GM23248 (cell line): ENCODE measurements at regions of chr7 and their contacts with region 1.

Region 1: GRCh38 chr7:140810830-140811556 is 113.7 kb downstream of the BRAF start:
- DNase-seq: peak; percentile 72
- H3K4me3 ChIP-seq: no peak overlapping the region
- H3K27ac ChIP-seq: no peak overlapping the region
- H3K4me1 ChIP-seq: no peaks in the 10 kb centered on the region
- H3K27me3 ChIP-seq: no peaks in the 10 kb centered on the region

Region 2: DNA sequence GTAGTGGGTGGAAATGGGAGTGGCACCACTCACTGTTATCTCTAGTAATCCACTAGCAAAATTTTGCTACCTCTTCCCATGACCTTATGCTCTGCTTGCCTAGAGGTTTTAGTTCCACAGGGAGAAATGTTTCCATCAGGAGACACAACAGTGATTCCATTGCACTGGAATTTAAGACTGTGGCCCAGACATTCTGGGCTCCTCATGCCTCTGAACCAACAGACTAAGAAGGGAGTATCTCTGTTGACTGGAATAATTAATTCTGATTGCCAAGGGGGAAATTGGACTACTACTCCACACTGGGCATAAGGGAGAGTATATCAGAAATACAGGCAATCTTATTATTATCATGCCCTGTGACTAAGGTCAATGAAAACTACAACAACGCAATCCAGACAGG is 129.9 kb after region 1 on chr7:
- in situ Hi-C with region 1: no loop called
- DNase-seq: peak; percentile 4
- H3K4me3 ChIP-seq: no peak overlapping the region
- H3K27ac ChIP-seq: no peak overlapping the region
- H3K4me1 ChIP-seq: no peaks in the 10 kb centered on the region
- H3K27me3 ChIP-seq: no peaks in the 10 kb centered on the region

Region 3: GRCh38 chr7:141001122-141001521 is 190.1 kb after region 1 on chr7:
- in situ Hi-C with region 1: loop called (anchors 10 kb)
- DNase-seq: no peak
- H3K4me3 ChIP-seq: no peak overlapping the region
- H3K27ac ChIP-seq: no peak overlapping the region
- H3K4me1 ChIP-seq: no peaks in the 10 kb centered on the region
- H3K27me3 ChIP-seq: no peaks in the 10 kb centered on the region

Region 4: DNA sequence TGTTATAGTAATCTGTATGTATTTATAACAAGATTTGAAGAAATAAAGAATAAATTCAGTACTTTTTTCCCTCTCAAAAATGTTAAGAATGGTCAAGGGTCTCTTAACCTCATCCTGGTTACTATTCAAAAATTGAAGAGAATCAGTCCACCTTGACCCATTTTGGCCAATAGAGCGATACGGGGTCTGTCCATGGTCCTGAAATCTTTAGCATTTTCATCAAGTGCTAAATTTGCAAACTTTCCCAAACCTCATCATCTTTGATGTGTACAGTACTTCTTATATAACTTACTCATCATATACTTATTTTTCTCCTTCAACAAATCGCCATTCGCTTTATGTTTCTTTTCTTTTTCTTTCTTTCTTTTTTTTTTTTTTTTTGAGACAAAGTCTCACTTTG is 286.4 kb after region 1 on chr7:
- in situ Hi-C with region 1: no loop called
- DNase-seq: peak; percentile 30
- H3K4me3 ChIP-seq: no peak overlapping the region
- H3K27ac ChIP-seq: no peak overlapping the region
- H3K4me1 ChIP-seq: no peaks in the 10 kb centered on the region
- H3K27me3 ChIP-seq: no peaks in the 10 kb centered on the region

Region 5: GRCh38 chr7:141533149-141533949 is 722.4 kb after region 1 on chr7:
- in situ Hi-C with region 1: loop called (anchors 25 kb)
- DNase-seq: peak; percentile 82
- H3K4me3 ChIP-seq: no peak overlapping the region
- H3K27ac ChIP-seq: no peak overlapping the region
- H3K4me1 ChIP-seq: no peaks in the 10 kb centered on the region
- H3K27me3 ChIP-seq: 0 out of 2 replicates have a peak, but pooled peaks cover 3% of the 10 kb centered on the region